Sciatic nerve (tissue), 2 donors: ENCODE measurements at regions of chr17 and their contacts with region 1.

Region 1: GRCh38 chr17:14222620-14223019 is 14.0 kb downstream of the CDRT15 start:
- DNase-seq: no peak
- ATAC-seq: no peak

Region 2: DNA sequence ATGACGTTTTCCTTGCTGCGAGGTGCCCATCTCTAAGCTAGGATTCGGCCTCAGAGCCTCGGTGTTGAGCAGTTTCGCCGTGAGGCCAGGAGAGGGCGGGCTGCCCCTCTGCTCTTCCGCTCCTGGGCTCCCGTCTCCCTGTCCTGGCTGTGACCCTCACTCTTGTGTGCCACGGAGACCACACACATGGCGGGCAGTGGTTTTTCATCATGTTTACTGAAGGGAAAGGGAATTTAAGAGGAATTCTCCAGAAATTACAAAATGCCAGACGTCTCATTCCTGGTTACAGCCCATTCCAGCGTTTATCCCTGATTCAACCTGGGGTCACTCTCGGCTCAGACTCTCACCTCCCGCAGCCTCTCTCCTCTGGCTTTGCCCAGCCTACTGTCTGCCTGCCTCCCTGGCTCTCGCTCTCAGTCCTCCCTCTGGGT is 1108.0 kb before region 1 on chr17:
- intact Hi-C with region 1: loop called (anchors 5 kb)
- DNase-seq: no peak
- ATAC-seq: peak; percentile 88

Region 3: DNA sequence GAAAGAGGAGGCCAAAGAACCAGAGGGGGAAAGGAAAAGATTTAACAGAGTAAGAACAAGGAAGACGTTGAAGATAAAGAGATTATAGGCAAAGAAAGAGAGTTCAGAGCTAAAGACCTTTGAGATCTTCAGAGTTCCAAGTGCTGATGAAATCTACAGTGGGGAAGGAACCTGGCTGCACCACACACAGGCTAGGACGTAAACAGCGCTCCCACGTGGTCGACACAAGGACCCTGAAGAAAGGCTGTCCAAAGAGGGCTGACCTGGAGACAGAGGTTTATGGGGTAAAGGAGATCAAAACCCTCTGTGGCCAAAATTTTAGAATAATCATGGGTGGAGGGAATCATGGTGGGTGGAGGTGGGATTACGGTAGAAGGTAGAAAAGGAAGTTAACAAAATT is 920.9 kb after region 1 on chr17:
- intact Hi-C with region 1: no loop called
- DNase-seq: no peak
- ATAC-seq: no peak